Activated CD8-positive, alpha-beta memory T cell treated with anti-CD3 and anti-CD28 coated beads, Interleukin-2, amount 10 ng/mL, durations not matched to agents 7 days and 5 days (primary cell): ENCODE measurements at regions of chr22 and their contacts with region 1.

Region 1: GRCh38 chr22:44684506-44685383 is 17.3 kb upstream of the PRR5 start:
- DNase-seq: peak; percentile 95
- ATAC-seq: peak; percentile 86
- H3K4me3 Mint-ChIP-seq: peak overlapping the region; percentile 44
- H3K27ac Mint-ChIP-seq: peak overlapping the region; percentile 88
- H3K4me1 Mint-ChIP-seq: peaks cover 66% of the 10 kb centered on the region
- H3K27me3 Mint-ChIP-seq: no peaks in the 10 kb centered on the region

Region 2: DNA sequence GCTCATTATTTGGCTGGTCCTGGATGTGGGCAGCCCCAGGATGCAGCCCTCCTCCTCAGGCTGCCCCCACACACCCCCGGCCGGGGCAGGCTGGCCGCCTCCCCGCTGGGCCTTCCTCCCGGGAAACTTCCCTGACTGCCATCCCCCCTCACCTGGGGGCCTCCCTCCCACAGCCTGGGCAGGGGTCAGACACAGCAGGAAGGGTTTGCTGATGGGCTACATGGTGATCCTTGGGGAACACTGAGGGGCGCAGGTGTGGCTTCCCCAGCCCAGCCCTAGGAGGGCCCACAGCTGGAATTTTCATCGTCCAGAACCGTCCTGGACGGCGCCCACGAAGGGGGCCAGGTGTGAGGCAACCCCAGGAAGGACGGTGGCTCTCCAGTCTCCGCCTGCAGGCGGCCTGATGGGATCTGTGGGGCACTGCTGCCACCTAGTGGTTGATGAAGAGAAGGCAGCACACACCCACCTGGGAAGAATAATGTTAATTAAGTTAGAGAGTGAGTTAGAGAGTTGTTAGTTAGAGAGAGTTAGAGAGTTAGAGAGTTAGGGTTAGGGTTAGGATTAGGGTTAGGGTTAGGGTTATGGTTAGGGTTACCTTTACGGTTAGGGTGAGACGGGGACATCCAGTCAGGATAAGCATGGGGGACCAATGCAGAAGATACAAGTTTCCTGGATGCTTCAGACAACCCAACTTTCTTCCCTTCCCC is 58.6 kb before region 1 on chr22:
- CTCF ChIA-PET with region 1: interaction called, 18 read pairs
- DNase-seq: peak; percentile 84
- ATAC-seq: peak; percentile 81
- H3K4me3 Mint-ChIP-seq: no peak overlapping the region
- H3K27ac Mint-ChIP-seq: no peak overlapping the region
- H3K4me1 Mint-ChIP-seq: peaks cover 7% of the 10 kb centered on the region
- H3K27me3 Mint-ChIP-seq: peaks cover 3% of the 10 kb centered on the region

Region 3: GRCh38 chr22:44634426-44635351 is 50.1 kb before region 1 on chr22:
- CTCF ChIA-PET with region 1: interaction called, 10 read pairs
- DNase-seq: no peak
- ATAC-seq: no peak
- H3K4me3 Mint-ChIP-seq: no peak overlapping the region
- H3K27ac Mint-ChIP-seq: no peak overlapping the region
- H3K4me1 Mint-ChIP-seq: no peaks in the 10 kb centered on the region
- H3K27me3 Mint-ChIP-seq: no peaks in the 10 kb centered on the region

Region 4: DNA sequence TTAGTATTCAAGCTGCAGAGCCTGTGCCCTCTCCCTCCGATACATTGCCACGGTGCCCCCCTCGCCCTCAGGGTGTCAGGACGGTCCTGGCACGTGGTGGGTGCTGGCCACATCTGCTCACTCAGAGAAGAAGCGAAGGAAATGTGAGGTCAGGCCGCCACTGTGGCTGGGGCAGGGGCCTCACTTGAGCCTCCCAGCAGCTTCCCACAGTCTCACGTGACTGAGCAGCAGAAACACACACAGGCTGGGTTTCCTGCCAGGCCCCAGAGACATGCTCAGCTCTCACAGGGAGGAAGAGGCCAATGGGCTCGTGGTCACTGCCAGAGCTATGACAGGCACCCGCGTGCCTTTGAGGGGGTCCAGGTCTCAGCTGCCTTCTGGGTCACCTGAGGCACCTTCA is 20.6 kb before region 1 on chr22:
- CTCF ChIA-PET with region 1: interaction called, 175 read pairs
- DNase-seq: peak; percentile 93
- ATAC-seq: peak; percentile 54
- H3K4me3 Mint-ChIP-seq: no peak overlapping the region
- H3K27ac Mint-ChIP-seq: peak overlapping the region; percentile 79
- H3K4me1 Mint-ChIP-seq: peaks cover 50% of the 10 kb centered on the region
- H3K27me3 Mint-ChIP-seq: peaks cover 19% of the 10 kb centered on the region

Region 5: DNA sequence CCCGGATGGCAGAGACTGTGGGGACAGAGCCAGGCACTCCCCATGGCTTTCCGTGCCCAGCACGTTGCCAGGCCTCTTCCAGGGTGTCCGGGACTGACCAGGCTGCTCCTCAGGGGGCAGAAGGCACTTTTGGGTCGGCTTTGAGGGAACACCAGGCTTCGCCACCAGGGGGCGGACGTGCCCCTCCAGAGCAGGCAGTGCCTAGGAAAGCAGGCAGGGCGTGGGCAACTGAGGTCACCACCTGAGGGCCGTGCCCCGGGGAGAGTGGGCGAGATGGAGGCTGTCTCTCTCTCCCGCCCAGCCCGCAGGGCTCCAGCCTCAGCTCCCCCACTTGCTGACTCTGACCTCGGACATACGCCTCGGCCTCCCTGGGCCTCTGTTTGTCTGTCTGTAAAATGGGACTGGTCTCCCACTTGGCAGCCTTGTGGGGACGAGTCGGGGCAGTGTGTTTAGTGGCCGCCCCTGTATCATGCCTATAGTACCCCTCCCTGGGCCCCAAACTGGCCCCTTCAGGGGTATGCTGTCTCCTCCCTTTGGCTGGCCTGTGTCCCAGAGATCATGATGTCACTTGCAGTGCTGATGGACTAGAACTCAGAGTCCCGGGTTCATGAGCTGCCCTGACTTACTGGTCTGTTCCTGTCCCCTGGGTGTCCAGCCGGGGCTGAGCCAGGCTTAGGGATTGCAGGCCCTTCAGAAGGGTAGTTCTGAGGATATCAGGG is 12.8 kb after region 1 on chr22:
- CTCF ChIA-PET with region 1: interaction called, 32 read pairs
- DNase-seq: peak; percentile 89
- ATAC-seq: peak; percentile 43
- H3K4me3 Mint-ChIP-seq: no peak overlapping the region
- H3K27ac Mint-ChIP-seq: peak overlapping the region; percentile 57
- H3K4me1 Mint-ChIP-seq: peaks cover 17% of the 10 kb centered on the region
- H3K27me3 Mint-ChIP-seq: peaks cover 2% of the 10 kb centered on the region

Region 6: GRCh38 chr22:44735540-44736488 is 51.1 kb after region 1 on chr22:
- CTCF ChIA-PET with region 1: interaction called, 18 read pairs
- DNase-seq: peak; percentile 85
- ATAC-seq: peak; percentile 75
- H3K4me3 Mint-ChIP-seq: no peak overlapping the region
- H3K27ac Mint-ChIP-seq: no peak overlapping the region
- H3K4me1 Mint-ChIP-seq: no peaks in the 10 kb centered on the region
- H3K27me3 Mint-ChIP-seq: no peaks in the 10 kb centered on the region